ENCODE measurements at regions of chr19 and their contacts with region 1.

Region 1: GRCh38 chr19:40139533-40140287 is 49.0 kb upstream of the ZNF780A start:
- DNase-seq: no peak
- ATAC-seq: peak in 1 of 2 donors; percentile 50
- H3K4me3 ChIP-seq: no peak overlapping the region
- H3K27ac ChIP-seq: no peak overlapping the region
- H3K4me1 ChIP-seq: no peaks in the 10 kb centered on the region
- H3K27me3 ChIP-seq: peaks cover 0 to 12% (median 2%) of the 10 kb centered on the region in 3 donors
- CTCF ChIP-seq: peak; percentile 37 to 66 (median 62)
- POLR2A ChIP-seq: no peak

Region 2: GRCh38 chr19:40081411-40081810 is 58.3 kb before region 1 on chr19:
- in situ Hi-C with region 1: no loop called
- intact Hi-C with region 1: no loop called
- DNase-seq: no peak
- ATAC-seq: no peak
- H3K4me3 ChIP-seq: no peak overlapping the region
- H3K27ac ChIP-seq: no peak overlapping the region
- H3K4me1 ChIP-seq: no peaks in the 10 kb centered on the region
- H3K27me3 ChIP-seq: no peaks in the 10 kb centered on the region
- CTCF ChIP-seq: no peak
- POLR2A ChIP-seq: no peak

Region 3: DNA sequence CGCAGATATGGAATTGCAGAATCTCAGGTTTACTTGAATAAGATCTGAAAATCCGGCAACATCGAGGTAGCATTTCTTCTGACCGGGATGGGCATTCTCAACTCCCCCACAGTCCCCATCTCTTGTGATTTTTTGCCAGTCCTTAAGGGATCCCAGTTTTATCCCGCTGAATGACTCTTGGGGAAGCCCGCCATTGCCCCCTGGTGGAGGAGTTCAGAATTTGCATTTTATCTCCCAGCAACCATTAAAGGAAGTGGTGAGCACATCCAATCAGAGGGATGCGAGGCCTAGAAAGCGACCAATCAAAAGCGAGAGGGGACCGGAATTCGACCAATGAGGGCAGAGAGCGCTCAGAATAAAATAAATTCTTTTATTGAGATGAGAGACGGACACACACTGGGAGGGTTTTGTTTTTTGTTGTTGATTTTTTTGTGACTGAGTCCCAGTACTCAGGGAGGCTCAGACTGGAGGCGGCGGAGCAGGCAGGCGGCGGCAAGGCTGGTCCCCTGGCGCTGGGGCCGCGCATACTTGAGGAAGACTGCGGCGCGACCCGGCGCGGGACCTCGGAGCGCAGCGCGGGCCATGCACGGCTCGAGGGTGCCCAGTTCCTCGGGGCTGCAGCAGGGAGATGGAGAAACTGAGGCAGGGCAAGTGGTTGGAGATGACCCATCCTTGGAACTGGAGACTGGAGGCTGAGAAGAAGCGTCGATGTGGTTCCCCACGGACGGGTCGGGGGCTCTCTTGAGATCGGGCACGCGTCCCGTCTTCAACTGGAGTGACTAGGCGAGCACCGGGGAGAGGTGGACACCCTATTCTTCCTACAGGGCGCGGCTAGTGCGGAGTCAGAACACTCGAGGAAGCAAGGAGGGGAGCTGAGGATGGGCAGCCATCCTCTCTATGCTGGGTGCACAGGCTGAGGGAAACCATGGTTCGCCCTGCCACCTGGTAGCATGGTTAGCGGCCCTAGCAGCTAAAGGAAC is 82.4 kb after region 1 on chr19:
- in situ Hi-C with region 1: loop called (anchors 5 to 10 kb)
- intact Hi-C with region 1: loop called (anchors 1 kb)
- DNase-seq: peak; percentile 67 to 83
- ATAC-seq: peak; percentile 91 to 93
- H3K4me3 ChIP-seq: no peak overlapping the region
- H3K27ac ChIP-seq: no peak overlapping the region
- H3K4me1 ChIP-seq: peaks cover 11 to 14% of the 10 kb centered on the region in 2 donors
- H3K27me3 ChIP-seq: peaks cover 58 to 76% (median 70%) of the 10 kb centered on the region in 3 donors
- CTCF ChIP-seq: peak; percentile 84 to 93 (median 90)
- POLR2A ChIP-seq: no peak

Measured in gastrocnemius medialis (tissue), 4 donors.